Activated B cell treated with CpG ODN at 0.5 μM for 24 hours (primary cell): ENCODE measurements at regions of chr7 and their contacts with region 1.

Region 1: DNA sequence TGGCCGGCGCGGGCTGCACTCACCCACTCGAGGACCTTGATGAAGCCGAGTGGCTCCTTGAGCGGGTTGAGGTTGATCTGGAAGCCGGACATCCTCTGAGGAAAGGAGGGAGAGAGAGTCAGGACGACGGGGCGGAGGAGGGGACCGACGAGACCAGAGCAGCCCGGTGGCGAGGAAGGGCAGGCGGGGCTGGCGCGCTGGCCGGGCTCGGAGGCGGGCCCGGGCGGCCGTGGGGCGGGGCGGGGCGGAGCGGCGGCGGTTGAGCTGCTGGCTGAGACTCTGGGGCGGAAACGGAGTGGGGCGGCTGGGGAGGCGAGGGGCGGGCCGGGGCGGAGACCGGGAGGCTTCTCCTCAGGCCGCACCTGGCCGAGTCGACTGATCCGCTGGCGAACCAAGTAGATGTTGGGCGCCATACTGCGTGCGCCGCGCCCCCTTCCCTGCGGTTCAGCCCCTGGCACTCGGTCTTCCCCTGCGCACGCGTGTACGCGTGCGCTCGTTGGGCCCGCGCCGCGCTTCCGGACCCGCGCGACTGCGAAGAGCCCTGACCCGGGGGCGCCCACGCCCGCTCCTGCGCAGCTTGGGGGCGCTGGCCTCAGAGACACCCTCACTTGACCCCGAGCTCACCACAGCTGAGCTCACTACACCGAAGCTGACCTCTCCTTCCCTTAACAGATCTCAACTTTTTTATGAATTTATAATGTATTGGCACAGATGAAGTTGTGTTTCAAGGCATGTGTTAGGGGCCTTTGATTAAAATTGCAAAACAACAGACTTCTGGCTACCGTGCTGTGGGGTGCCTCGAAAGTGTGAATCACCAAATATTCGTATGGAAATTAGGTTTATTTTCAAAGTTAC is at the start of gene SYPL1:
- DNase-seq: peak; percentile 94
- ATAC-seq: peak; percentile 76
- H3K4me3 Mint-ChIP-seq: peak within 1 kb of the TSS; percentile 94
- H3K27ac Mint-ChIP-seq: peak within 1 kb of the TSS; percentile 97
- H3K4me1 Mint-ChIP-seq: peaks cover 80% of the 10 kb centered on the region
- H3K27me3 Mint-ChIP-seq: no peaks in the 10 kb centered on the region
- CTCF ChIP-seq: no peak
- total RNA-seq, gene SYPL1: 109 and 116 TPM in 2 replicates

Region 2: DNA sequence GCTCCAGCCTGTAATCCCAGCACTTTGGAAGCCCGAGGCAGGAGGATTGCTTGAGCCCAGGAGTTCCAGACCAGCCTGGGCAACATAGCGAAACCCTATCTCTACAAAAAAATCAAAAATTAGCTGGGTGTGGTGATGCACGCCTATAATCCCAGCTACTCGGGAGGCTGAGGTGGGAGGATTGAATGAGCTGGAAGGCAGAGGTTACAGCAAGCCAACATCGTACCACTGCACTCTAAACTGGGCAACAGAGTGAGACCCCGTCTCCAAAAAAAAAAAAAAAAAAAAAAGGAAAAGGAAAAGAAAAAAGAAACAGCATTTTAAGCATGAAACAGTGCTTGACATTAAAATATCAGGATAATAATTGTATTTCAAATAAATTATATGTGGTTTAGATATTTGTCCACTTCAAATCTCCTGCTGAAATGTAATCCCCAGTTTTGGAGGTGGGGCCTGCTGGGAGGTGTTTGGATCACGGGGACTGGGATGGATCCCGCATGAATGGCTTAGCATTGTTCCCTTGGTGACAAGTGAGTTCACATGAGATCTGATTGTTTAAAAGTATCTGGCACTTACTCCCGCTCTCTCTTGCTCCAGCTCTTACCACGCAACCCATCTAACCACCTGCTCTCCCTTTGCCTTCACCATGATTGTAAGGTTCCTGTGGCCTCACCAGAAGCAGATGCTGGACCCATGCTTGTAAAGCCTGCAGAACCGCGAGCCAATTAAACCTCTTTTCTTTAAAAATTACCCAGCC is 827.0 kb before region 1 on chr7:
- CTCF ChIA-PET with region 1: no interaction called
- POLR2A ChIA-PET with region 1: no interaction called
- intact Hi-C with region 1: no loop called
- DNase-seq: no peak
- ATAC-seq: no peak
- H3K4me3 Mint-ChIP-seq: no peak overlapping the region
- H3K27ac Mint-ChIP-seq: no peak overlapping the region
- H3K4me1 Mint-ChIP-seq: peaks cover 25% of the 10 kb centered on the region
- H3K27me3 Mint-ChIP-seq: no peaks in the 10 kb centered on the region
- CTCF ChIP-seq: no peak

Region 3: GRCh38 chr7:105652359-105652993 is 459.9 kb before region 1 on chr7:
- CTCF ChIA-PET with region 1: no interaction called
- POLR2A ChIA-PET with region 1: no interaction called
- intact Hi-C with region 1: no loop called
- DNase-seq: peak; percentile 45
- ATAC-seq: peak; percentile 94
- H3K4me3 Mint-ChIP-seq: no peak overlapping the region
- H3K27ac Mint-ChIP-seq: no peak overlapping the region
- H3K4me1 Mint-ChIP-seq: peaks cover 2% of the 10 kb centered on the region
- H3K27me3 Mint-ChIP-seq: no peaks in the 10 kb centered on the region
- CTCF ChIP-seq: no peak

Region 4: GRCh38 chr7:106071356-106071998 is 40.9 kb before region 1 on chr7:
- CTCF ChIA-PET with region 1: interaction called, 5 read pairs
- POLR2A ChIA-PET with region 1: interaction called, 250 read pairs
- intact Hi-C with region 1: loop called (anchors 1 kb)
- DNase-seq: peak; percentile 57
- ATAC-seq: peak; percentile 87
- H3K4me3 Mint-ChIP-seq: peak overlapping the region; percentile 73
- H3K27ac Mint-ChIP-seq: peak overlapping the region; percentile 98
- H3K4me1 Mint-ChIP-seq: peaks cover 100% of the 10 kb centered on the region
- H3K27me3 Mint-ChIP-seq: no peaks in the 10 kb centered on the region
- CTCF ChIP-seq: no peak

Region 5: DNA sequence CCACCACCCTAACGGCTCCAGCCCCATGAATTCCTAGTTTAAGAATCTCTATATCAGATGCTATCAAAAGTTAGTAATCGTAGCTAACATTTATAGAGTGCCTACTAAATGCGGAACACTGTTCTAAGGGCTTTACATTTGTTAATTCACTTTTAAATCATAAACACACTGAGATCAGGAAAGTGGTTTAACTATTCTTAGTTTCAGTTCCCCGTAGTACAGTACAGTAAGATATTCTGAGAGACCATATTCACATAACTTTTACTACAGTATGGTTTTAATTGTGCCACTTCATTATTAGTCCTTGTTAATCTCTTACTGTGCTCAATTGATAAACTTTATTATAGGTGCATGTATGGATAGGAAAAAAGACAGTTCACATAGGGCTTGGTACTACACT is 22.7 kb before region 1 on chr7:
- CTCF ChIA-PET with region 1: interaction called, 4 read pairs
- POLR2A ChIA-PET with region 1: interaction called, 57 read pairs
- intact Hi-C with region 1: loop called (anchors 1 kb)
- DNase-seq: no peak
- ATAC-seq: peak; percentile 88
- H3K4me3 Mint-ChIP-seq: peak overlapping the region; percentile 65
- H3K27ac Mint-ChIP-seq: peak overlapping the region; percentile 83
- H3K4me1 Mint-ChIP-seq: peaks cover 82% of the 10 kb centered on the region
- H3K27me3 Mint-ChIP-seq: no peaks in the 10 kb centered on the region
- CTCF ChIP-seq: no peak

Region 6: DNA sequence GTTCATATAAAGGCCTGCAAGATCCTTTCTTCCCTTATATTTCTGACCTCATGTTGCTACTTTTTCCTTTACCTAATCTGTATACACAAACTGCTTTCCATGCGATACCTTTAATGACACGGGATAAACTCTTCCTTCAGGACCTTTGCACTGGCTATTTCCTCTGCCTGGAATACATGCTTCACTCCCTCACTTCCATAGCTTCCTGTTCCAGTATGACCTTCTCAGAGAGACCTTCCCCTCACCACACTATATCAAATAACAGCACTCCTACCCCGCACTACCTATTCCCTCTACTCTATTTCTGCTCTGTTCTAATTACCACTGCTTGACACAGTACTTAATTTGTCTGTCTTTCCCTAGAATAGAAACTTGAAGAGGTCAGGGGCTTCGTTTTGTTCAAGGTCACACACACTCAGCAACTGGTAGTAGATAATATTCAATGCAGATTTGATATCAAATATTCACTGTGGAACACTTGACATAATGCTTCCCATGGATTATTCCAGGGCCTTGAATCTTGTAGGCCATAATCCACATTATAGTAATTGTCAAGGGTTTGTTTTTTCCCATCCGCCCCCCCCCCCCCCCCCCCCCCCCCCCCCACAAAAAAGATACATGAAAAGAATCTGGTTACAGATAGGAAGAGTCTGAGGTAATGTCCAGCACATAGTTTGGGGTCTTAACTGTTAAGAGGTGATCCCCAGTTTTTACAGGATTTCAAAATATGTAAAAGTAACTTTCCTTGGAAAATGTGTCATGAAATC is 11.3 kb before region 1 on chr7:
- CTCF ChIA-PET with region 1: interaction called, 5 read pairs
- POLR2A ChIA-PET with region 1: interaction called, 57 read pairs
- intact Hi-C with region 1: loop called (anchors 1 kb)
- DNase-seq: no peak
- ATAC-seq: no peak
- H3K4me3 Mint-ChIP-seq: peak overlapping the region; percentile 2
- H3K27ac Mint-ChIP-seq: peak overlapping the region; percentile 83
- H3K4me1 Mint-ChIP-seq: peaks cover 82% of the 10 kb centered on the region
- H3K27me3 Mint-ChIP-seq: no peaks in the 10 kb centered on the region
- CTCF ChIP-seq: no peak